GM12878 (cell line): ENCODE measurements at regions of chr9 and their contacts with region 1.

Region 1: DNA sequence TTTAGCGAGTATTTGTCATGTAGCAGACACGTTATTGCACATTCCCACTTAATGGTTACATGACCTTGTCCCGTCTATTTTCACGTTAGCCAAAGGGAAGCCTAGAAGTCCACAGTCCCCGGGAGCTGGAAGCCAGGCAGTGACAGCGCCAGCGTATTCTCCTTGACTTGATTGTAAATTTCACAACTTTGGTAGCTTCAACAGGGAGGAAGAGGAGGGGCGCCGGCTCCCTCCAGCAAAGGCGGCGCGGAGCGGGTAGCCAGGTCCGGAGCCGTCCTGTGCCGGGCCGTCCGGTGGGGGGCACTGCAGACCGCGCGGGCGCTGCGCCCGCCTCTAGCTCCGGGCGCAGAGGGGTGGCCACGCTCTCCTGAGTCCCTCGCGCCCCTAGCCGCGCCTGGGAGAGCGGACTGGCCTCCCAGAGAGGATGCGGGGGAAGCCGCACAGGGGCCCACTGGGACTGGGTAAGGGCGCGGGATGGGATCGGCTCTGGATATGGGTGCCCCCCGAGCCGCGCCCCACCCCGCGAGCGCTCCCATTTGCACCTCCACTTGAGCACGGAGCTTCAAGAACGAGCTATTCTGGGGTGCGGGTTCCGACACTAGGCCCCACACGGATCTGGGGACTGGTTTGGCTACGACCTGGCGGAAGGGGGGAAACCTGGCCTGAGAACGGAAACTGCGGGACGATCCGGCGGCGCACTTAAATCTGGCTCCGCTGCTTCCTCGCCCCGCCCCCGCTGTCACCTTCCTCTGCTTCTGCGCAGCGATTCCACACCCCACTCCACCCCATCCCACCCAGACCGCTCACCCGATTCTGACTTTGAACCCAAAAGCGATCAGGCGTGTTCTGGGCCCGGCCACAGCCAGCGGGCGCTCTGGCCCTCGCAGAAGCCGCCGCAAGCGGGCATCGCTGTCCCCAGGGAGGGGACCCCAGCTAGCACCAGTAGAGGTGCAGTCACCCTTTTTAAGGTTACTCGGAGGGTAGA is 23.8 kb downstream of the KLF4 start:
- DNase-seq: no peak
- ATAC-seq: peak; percentile 97
- H3K4me3 ChIP-seq: no peak overlapping the region
- H3K27ac ChIP-seq: no peak overlapping the region
- H3K4me1 ChIP-seq: no peaks in the 10 kb centered on the region
- H3K27me3 ChIP-seq: peaks cover 7 to 21% of the 10 kb centered on the region in 2 experiments
- CTCF ChIP-seq: peak; percentile 44 to 59 (median 52); a peak in 5 of 6 replicates
- EP300 ChIP-seq: no peak
- POLR2A ChIP-seq: no peak
- RAD21 ChIP-seq: peak; percentile 50; the same call in 1 of the 2 replicates

Region 2: GRCh38 chr9:107373809-107374208 is 92.0 kb before region 1 on chr9:
- CTCF ChIA-PET with region 1: no interaction called
- POLR2A ChIA-PET with region 1: no interaction called
- RAD21 ChIA-PET with region 1: no interaction called
- SMC1A ChIA-PET with region 1: no interaction called
- in situ Hi-C with region 1: no loop called
- intact Hi-C with region 1: no loop called
- DNase-seq: no peak
- ATAC-seq: no peak
- H3K4me3 ChIP-seq: no peak overlapping the region
- H3K27ac ChIP-seq: no peak overlapping the region
- H3K4me1 ChIP-seq: no peaks in the 10 kb centered on the region
- H3K27me3 ChIP-seq: no peaks in the 10 kb centered on the region
- CTCF ChIP-seq: no peak
- EP300 ChIP-seq: no peak
- POLR2A ChIP-seq: no peak
- RAD21 ChIP-seq: no peak

Region 3: DNA sequence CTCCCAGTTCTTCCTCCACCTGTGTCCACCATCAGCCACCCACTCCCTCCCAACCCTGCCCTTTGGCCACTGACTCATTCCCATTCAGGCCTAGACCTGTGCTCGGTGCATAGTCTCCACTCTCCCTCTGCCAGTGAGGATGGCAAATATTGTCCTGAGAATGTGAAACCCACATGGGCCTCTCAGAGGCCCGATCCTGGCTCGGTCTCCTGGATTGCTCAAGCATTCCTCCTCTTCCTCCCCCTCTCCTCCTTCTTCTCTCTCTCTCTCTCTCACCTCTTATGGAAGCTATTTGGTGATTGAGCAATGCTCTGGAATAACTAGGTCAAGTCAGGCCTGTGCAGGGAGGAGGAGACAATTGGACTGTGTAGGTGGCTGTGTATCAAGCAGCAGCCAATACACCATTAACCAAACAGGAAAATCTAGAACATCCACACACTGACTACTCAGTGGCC is 76.1 kb before region 1 on chr9:
- CTCF ChIA-PET with region 1: no interaction called
- POLR2A ChIA-PET with region 1: no interaction called
- RAD21 ChIA-PET with region 1: no interaction called
- SMC1A ChIA-PET with region 1: no interaction called
- in situ Hi-C with region 1: loop called (anchors 10 kb)
- intact Hi-C with region 1: no loop called
- DNase-seq: no peak
- ATAC-seq: no peak
- H3K4me3 ChIP-seq: no peak overlapping the region
- H3K27ac ChIP-seq: no peak overlapping the region
- H3K4me1 ChIP-seq: no peaks in the 10 kb centered on the region
- H3K27me3 ChIP-seq: peaks cover 0 to 6% of the 10 kb centered on the region in 2 experiments; a peak in 2 of 4 replicates
- CTCF ChIP-seq: no peak
- EP300 ChIP-seq: no peak
- POLR2A ChIP-seq: no peak
- RAD21 ChIP-seq: no peak

Region 4: DNA sequence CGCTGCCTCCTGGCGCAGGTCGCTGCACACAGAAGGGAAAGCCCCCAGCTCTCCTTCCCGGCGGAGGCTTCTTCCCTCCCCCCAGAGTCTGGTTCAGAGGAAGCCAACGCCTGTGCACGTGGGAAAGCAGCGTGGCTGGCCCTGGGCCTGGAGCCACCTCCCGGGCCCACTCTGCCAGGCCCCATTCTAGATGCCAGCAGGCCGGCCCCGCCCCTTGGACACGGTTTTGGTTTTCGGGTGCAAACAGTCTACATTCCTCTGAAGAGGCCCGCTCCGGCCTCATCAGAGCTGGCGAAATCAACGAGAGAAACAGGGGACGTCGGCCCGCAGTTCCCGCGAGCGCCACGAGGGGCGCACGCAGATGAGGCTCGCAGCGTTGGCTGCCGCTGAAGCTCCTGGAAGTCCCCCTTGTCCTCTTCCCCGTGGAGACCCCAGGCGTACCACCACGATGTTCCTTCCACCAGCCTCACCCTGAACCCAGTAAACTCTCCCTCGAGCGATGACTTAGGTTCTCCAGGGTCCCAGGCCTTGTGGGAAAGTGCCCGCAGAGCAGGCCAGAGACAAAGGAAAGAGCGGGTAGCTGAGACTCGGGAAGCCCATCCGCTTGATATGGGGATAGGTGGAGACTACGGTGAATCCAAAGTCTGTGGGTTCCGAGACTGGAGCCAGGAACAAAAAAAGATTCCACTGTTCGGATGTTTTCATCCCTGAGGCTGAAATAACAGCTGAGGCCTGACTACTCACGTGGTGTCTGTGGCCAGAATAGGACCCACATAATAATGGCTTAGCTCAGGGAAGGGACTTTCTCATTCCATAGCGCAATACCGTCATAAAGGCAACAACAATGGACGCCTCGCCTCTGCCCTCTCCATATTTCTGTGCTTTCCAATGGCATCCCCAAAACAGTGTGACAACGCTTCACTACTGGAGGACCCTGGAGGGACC is 40.4 kb before region 1 on chr9:
- CTCF ChIA-PET with region 1: interaction called, 3 read pairs
- POLR2A ChIA-PET with region 1: no interaction called
- RAD21 ChIA-PET with region 1: no interaction called
- SMC1A ChIA-PET with region 1: no interaction called
- in situ Hi-C with region 1: loop called (anchors 5 kb)
- intact Hi-C with region 1: no loop called
- DNase-seq: no peak
- ATAC-seq: peak; percentile 90
- H3K4me3 ChIP-seq: no peak overlapping the region
- H3K27ac ChIP-seq: no peak overlapping the region
- H3K4me1 ChIP-seq: no peaks in the 10 kb centered on the region
- H3K27me3 ChIP-seq: no peaks in the 10 kb centered on the region
- CTCF ChIP-seq: peak; percentile 67 to 97 (median 95)
- EP300 ChIP-seq: no peak
- POLR2A ChIP-seq: no peak
- RAD21 ChIP-seq: no peak